Activated CD8-positive, alpha-beta memory T cell treated with anti-CD3 and anti-CD28 coated beads, Interleukin-2, amount 10 ng/mL, durations not matched to agents 7 days and 5 days (primary cell): ENCODE measurements at regions of chr17 and their contacts with region 1.

Region 1: GRCh38 chr17:38982858-38983746 is 15.9 kb upstream of the FBXO47 start:
- DNase-seq: peak; percentile 70
- ATAC-seq: peak; percentile 60
- H3K4me3 Mint-ChIP-seq: no peak overlapping the region
- H3K27ac Mint-ChIP-seq: no peak overlapping the region
- H3K4me1 Mint-ChIP-seq: peaks cover 7% of the 10 kb centered on the region
- H3K27me3 Mint-ChIP-seq: peaks cover 11% of the 10 kb centered on the region

Region 2: GRCh38 chr17:38922538-38923297 is 60.4 kb before region 1 on chr17:
- CTCF ChIA-PET with region 1: interaction called, 11 read pairs
- DNase-seq: peak; percentile 40
- ATAC-seq: no peak
- H3K4me3 Mint-ChIP-seq: no peak overlapping the region
- H3K27ac Mint-ChIP-seq: no peak overlapping the region
- H3K4me1 Mint-ChIP-seq: peaks cover 34% of the 10 kb centered on the region
- H3K27me3 Mint-ChIP-seq: no peaks in the 10 kb centered on the region

Region 3: GRCh38 chr17:39074676-39075075 is 91.6 kb after region 1 on chr17:
- CTCF ChIA-PET with region 1: no interaction called
- DNase-seq: no peak
- ATAC-seq: no peak
- H3K4me3 Mint-ChIP-seq: no peak overlapping the region
- H3K27ac Mint-ChIP-seq: no peak overlapping the region
- H3K4me1 Mint-ChIP-seq: peaks cover 18% of the 10 kb centered on the region
- H3K27me3 Mint-ChIP-seq: no peaks in the 10 kb centered on the region

Region 4: GRCh38 chr17:39096508-39097149 is 113.5 kb after region 1 on chr17:
- CTCF ChIA-PET with region 1: interaction called, 29 read pairs
- DNase-seq: peak; percentile 87
- ATAC-seq: peak; percentile 57
- H3K4me3 Mint-ChIP-seq: peak overlapping the region; percentile 64
- H3K27ac Mint-ChIP-seq: peak overlapping the region; percentile 92
- H3K4me1 Mint-ChIP-seq: peaks cover 57% of the 10 kb centered on the region
- H3K27me3 Mint-ChIP-seq: peaks cover 6% of the 10 kb centered on the region

Region 5: GRCh38 chr17:39164675-39165143 is 181.6 kb after region 1 on chr17:
- CTCF ChIA-PET with region 1: interaction called, 86 read pairs
- DNase-seq: peak; percentile 90
- ATAC-seq: peak; percentile 95
- H3K4me3 Mint-ChIP-seq: peak overlapping the region; percentile 81
- H3K27ac Mint-ChIP-seq: peak overlapping the region; percentile 76
- H3K4me1 Mint-ChIP-seq: peaks cover 42% of the 10 kb centered on the region
- H3K27me3 Mint-ChIP-seq: peaks cover 20% of the 10 kb centered on the region

Region 6: DNA sequence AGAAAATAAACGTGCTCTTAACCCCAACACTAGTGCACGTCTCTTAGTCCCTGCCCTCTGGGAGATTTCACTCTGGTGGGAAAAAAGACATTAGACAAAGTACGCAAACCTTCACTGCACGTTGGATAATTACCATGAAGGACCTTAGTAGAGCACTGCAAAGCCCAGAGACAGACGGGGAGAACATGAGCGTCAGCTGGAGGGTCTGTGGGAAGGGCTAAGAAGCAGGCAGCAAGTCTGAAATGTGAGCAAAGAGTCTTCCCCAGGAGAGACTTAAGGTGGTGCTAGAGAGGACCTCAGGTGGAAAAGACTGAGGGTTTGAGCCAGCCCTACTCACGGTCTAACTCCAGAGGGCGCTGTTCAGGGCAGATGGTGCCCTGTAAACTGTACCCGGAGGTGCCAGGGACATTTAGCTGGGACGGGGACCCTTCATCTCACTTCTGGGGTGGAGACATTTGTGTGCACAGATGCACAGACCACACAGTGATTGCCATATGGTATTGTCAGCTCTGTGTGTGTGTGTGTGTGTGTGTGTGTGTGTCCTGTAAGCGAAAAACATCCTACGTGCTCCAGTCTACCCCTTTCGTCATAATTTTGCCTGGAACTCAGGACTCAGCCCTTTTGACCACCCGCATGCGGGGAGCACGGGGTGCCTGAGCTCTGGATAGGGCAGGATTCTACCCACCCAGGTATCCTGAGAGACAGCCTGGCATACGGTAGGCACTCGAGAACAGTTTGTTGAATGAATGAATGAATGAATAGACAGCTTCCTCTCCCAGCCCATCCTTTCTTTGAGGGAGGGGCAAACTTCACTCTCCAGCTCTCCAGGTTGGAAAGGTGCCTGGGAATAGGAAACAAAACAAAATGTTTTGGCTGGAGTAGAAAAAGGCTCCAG is 252.7 kb after region 1 on chr17:
- CTCF ChIA-PET with region 1: interaction called, 15 read pairs
- DNase-seq: peak; percentile 75
- ATAC-seq: peak; percentile 72
- H3K4me3 Mint-ChIP-seq: no peak overlapping the region
- H3K27ac Mint-ChIP-seq: no peak overlapping the region
- H3K4me1 Mint-ChIP-seq: peaks cover 25% of the 10 kb centered on the region
- H3K27me3 Mint-ChIP-seq: peaks cover 12% of the 10 kb centered on the region